Common myeloid progenitor, CD34-positive (primary cell): ENCODE measurements at regions of chr12 and their contacts with region 1.

Region 1: GRCh38 chr12:55996715-55997534 is at the start of gene SUOX:
- DNase-seq: peak; percentile 72 to 89 (median 86)
- H3K4me3 ChIP-seq: peak within 1 kb of the TSS; percentile 79 to 95 (median 85)
- H3K27ac ChIP-seq: peak within 1 kb of the TSS; percentile 59 to 83
- H3K4me1 ChIP-seq: peaks cover 0 to 20% (median 17%) of the 10 kb centered on the region in 4 experiments
- H3K27me3 ChIP-seq: no peaks in the 10 kb centered on the region

Region 2: DNA sequence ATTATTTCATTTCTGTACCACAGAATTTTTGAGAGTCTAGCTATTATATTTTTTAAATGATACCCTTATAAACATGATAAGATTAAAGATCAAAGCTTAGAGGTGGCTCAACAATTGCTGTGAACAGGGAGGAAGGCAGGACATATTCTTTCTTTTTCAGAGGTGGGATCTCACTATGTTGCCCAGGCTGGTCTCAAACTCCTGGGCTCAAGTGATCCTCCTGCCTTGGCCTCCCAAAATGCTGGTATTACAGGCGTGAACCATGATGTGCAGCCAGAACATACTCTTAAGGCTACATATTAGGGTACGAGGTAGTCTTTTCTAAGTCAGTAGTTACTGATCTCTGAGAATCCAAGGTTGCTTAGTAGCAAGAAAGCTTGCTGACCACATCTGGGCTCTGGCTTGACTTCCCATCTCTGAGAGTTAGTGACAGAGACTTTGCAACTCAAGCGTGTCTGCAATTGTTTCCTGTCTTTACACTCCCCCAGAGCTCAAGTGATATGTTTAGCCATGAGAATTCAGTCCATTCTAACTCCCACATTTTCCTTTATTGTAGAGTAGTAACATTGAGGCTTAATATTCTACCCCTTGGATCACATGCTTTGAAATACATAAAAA is 14.5 kb before region 1 on chr12:
- CTCF ChIA-PET with region 1: interaction called, 70 read pairs
- POLR2A ChIA-PET with region 1: no interaction called
- DNase-seq: peak in 2 of 3 donors; percentile 16
- H3K4me3 ChIP-seq: no peak overlapping the region
- H3K27ac ChIP-seq: no peak overlapping the region
- H3K4me1 ChIP-seq: peaks cover 2 to 29% (median 5%) of the 10 kb centered on the region in 4 experiments
- H3K27me3 ChIP-seq: no peaks in the 10 kb centered on the region

Region 3: DNA sequence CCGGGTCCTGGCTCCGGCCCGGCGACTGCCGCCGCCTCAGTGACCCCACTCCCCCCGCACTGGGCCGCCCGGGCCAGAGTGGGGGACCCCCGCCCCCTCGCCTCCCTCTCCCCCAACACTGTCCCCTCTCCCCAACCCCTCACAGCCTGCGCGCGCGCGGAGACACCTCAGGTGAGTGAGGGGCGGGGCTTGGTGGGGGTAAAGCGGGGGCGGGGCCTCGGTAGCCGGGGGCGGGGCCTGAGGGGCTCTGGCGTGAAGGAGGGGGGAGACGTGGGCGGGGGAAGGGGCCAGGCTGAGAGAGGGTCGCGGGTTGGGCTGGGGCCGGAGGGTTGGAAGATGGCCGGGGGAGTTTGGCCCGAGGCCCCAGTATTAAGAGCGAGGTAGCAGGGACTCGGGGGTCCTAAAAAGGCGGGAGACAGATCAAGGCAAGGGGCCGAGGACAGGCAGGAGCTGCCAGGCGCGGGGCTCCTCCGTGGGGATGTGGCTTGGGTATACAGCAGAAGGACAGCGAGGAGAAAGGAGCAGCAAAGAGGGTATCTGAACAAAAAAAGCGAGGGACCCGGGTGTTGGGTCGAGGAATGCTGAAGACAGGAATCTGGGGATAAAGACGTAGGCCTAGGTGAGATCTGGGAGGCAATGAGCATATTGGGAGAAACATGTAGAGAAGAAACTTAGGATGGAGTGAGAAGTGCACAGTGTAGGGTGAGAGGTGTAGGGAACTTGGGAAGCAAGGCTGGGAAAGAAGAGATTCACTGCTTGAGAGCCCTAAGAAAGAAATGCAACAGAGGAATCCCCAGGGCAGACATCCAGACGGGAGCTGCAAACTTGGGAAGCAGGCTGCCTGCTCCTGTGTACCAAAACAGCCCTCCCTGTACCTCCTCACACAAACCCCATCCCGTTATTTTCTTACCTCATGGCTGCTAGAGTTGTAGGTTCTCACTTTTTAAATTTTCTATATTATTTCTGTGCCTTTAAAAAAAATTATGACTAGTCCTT is 10.9 kb after region 1 on chr12:
- CTCF ChIA-PET with region 1: interaction called, 45 read pairs
- POLR2A ChIA-PET with region 1: no interaction called
- DNase-seq: peak in 2 of 3 donors; percentile 33 to 42
- H3K4me3 ChIP-seq: peak overlapping the region; percentile 55 to 88 (median 73)
- H3K27ac ChIP-seq: peak overlapping the region in 1 of 2 experiments; percentile 67
- H3K4me1 ChIP-seq: peaks cover 5 to 27% (median 15%) of the 10 kb centered on the region in 4 experiments
- H3K27me3 ChIP-seq: no peaks in the 10 kb centered on the region

Region 4: GRCh38 chr12:56014206-56014605 is 17.3 kb after region 1 on chr12:
- CTCF ChIA-PET with region 1: interaction called, 290 read pairs
- POLR2A ChIA-PET with region 1: no interaction called
- DNase-seq: no peak
- H3K4me3 ChIP-seq: no peak overlapping the region
- H3K27ac ChIP-seq: no peak overlapping the region
- H3K4me1 ChIP-seq: no peaks in the 10 kb centered on the region
- H3K27me3 ChIP-seq: no peaks in the 10 kb centered on the region

Region 5: DNA sequence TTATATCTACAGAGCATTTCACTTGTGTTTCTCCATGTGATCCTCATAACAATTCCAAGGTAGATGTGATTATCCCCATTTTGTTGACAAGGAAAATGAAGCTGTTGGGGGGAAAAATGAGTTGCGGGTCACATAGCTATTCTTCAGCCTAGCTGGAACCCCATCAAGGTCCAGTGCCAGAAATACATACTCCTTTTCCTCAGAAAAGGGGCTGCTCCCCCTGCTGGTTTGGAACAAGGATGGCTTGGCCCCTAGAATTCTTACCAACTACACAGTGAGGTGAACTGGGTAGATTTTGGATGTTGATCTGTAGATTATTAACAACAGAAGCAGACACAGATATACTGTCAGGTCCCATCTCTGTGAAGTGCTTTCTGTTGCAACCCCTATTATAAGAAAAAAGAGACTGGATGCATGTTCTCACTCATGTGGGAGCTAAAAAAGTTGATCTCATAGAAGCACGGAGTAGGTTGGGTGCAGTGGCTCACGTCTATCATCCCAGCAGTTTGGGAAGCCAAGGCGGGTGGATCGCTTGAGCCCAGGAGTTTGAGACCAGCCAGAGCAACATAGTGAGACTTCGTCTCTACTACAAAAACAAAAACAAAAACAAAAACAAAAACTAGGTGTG is 32.9 kb after region 1 on chr12:
- CTCF ChIA-PET with region 1: interaction called, 290 read pairs
- POLR2A ChIA-PET with region 1: interaction called, 3 read pairs
- DNase-seq: peak; percentile 63 to 82 (median 75)
- H3K4me3 ChIP-seq: no peak overlapping the region
- H3K27ac ChIP-seq: no peak overlapping the region
- H3K4me1 ChIP-seq: no peaks in the 10 kb centered on the region
- H3K27me3 ChIP-seq: no peaks in the 10 kb centered on the region

Region 6: DNA sequence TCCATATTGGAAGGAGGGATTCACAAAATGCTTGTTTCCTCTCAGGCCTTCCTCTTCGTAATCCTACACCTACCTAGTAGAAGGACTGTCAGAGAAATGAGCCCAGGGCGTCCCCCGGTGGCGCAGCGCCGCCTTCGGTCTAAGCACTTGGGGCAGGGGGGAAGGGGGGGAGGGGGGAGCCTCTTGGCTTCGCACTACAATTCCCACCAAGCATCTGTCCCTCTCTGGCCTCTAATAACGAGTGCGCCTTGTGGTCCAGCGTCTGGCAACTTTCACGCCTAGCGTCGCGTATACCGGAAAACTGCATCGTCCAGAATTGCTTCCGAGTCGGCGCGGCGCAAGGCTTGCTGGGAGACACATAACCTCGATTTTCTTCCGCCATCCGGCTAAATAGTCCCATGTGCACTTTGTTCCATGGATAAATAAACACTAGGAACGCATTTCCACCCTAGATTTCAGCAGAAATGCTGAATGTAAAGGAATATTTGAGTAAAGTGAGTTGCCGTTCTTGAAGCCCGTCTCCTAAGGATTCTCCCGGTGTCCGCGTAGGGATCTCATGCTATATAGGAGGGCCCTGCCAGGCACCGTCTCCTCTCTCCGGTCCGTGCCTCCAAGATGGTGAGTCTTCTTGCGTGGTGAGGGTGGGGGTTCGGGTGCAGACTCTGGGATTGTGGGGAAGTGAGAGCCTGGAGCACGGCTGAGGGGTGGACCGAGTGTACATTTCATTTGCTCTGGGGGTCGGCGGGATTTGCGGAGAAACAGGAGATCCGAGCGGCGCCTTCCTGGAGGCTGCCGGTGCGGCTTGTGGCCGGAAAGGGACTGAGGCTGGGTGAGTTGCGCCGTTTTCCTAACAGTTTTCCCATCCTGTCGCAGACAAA is 44.9 kb after region 1 on chr12 and contains the start of gene RPS26:
- CTCF ChIA-PET with region 1: interaction called, 64 read pairs
- POLR2A ChIA-PET with region 1: interaction called, 3 read pairs
- DNase-seq: peak; percentile 99 to 100 (median 100)
- H3K4me3 ChIP-seq: peak within 1 kb of the TSS; percentile 89 to 99 (median 97)
- H3K27ac ChIP-seq: peak within 1 kb of the TSS; percentile 92 to 97
- H3K4me1 ChIP-seq: peaks cover 6 to 24% (median 15%) of the 10 kb centered on the region in 4 experiments
- H3K27me3 ChIP-seq: no peaks in the 10 kb centered on the region